SK-N-SH (cell line): ENCODE measurements at regions of chr9 and their contacts with region 1.

Region 1: DNA sequence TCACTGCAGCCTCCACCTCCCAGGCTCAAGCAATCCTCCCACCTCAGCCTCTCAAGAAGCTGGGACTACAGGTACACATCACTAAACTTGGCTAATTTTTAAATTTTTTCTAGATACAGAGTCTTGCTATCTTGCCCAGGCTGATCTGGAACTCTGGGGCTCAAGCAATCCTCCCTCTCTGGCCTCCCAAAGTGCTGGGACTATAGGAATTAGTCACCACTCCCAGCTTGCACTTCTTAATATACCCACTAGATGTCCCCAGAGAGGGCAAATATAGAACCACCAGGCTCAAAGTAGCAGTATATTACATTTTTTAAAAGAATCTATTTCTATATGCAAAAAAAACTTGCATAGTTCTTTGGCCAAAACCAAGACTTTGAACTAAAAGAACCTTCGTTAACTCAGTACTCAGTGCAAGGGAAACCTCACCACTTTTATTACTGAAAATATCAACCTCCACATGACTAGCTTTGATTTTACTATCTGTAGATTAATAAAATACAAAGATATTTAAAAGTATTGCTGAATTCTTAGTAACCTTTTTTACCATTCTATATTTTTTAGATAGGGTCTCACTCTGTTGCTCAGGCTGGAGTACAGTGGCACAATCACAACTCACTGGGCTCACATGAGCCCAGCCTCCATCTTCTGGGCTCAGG is 25.8 kb upstream of the HSD17B3 start:
- DNase-seq: peak; percentile 68
- H3K4me3 ChIP-seq: no peak overlapping the region
- H3K27ac ChIP-seq: no peak overlapping the region
- H3K4me1 ChIP-seq: 0 out of 4 replicates have a peak, but pooled peaks cover 0 to 3% of the 10 kb centered on the region in 2 experiments
- H3K27me3 ChIP-seq: no peaks in the 10 kb centered on the region
- CTCF ChIP-seq: peak; percentile 90
- EP300 ChIP-seq: no peak
- RAD21 ChIP-seq: peak; percentile 82

Region 2: GRCh38 chr9:96177005-96177718 is 150.7 kb before region 1 on chr9:
- CTCF ChIA-PET with region 1: no interaction called
- POLR2A ChIA-PET with region 1: no interaction called
- DNase-seq: peak; percentile 68
- H3K4me3 ChIP-seq: no peak overlapping the region
- H3K27ac ChIP-seq: no peak overlapping the region
- H3K4me1 ChIP-seq: no peaks in the 10 kb centered on the region; a peak in 1 of 4 replicates
- H3K27me3 ChIP-seq: no peaks in the 10 kb centered on the region
- CTCF ChIP-seq: no peak
- EP300 ChIP-seq: no peak
- RAD21 ChIP-seq: peak; percentile 53

Region 3: GRCh38 chr9:96232539-96233241 is 95.1 kb before region 1 on chr9:
- CTCF ChIA-PET with region 1: interaction called, 13 read pairs
- POLR2A ChIA-PET with region 1: no interaction called
- DNase-seq: peak; percentile 70
- H3K4me3 ChIP-seq: no peak overlapping the region; a peak in 1 of 4 replicates
- H3K27ac ChIP-seq: no peak overlapping the region
- H3K4me1 ChIP-seq: no peaks in the 10 kb centered on the region
- H3K27me3 ChIP-seq: no peaks in the 10 kb centered on the region
- CTCF ChIP-seq: peak; percentile 93
- EP300 ChIP-seq: no peak
- RAD21 ChIP-seq: peak; percentile 75

Region 4: DNA sequence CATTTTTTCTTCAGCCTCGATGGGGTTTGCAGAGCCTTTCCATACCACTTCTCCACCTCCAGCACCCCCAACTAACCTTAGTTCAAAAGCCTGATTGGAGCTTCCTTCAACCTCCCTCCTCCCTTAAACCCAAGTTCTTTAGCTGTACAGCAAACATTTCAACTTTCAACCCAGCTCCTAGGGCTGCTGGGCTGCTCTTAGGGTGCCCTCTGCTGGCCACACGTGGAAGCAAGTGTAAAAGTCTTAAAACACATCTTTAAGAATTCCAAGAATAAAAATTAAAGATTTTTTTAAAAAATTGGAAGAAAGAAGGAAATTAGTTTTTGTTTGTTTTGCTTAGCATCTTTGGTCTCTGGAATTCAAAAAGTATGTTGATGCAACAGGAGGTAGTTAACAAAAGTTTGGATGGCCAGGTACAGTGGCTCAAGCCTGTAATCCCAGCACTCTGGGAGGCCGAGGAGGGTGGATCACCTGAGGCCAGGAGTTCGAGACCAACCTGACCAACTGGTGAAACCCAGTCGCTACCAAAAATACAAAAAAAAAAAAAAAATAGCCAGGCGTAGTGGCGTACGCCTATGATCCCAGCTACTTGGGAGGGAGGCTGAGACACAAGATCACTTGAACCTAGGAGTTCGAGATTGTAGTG is 10.4 kb before region 1 on chr9:
- CTCF ChIA-PET with region 1: interaction called, 43 read pairs
- POLR2A ChIA-PET with region 1: no interaction called
- DNase-seq: peak; percentile 73
- H3K4me3 ChIP-seq: no peak overlapping the region; a peak in 1 of 4 replicates
- H3K27ac ChIP-seq: no peak overlapping the region
- H3K4me1 ChIP-seq: no peaks in the 10 kb centered on the region
- H3K27me3 ChIP-seq: no peaks in the 10 kb centered on the region
- CTCF ChIP-seq: peak; percentile 99
- EP300 ChIP-seq: no peak
- RAD21 ChIP-seq: peak; percentile 92

Region 5: DNA sequence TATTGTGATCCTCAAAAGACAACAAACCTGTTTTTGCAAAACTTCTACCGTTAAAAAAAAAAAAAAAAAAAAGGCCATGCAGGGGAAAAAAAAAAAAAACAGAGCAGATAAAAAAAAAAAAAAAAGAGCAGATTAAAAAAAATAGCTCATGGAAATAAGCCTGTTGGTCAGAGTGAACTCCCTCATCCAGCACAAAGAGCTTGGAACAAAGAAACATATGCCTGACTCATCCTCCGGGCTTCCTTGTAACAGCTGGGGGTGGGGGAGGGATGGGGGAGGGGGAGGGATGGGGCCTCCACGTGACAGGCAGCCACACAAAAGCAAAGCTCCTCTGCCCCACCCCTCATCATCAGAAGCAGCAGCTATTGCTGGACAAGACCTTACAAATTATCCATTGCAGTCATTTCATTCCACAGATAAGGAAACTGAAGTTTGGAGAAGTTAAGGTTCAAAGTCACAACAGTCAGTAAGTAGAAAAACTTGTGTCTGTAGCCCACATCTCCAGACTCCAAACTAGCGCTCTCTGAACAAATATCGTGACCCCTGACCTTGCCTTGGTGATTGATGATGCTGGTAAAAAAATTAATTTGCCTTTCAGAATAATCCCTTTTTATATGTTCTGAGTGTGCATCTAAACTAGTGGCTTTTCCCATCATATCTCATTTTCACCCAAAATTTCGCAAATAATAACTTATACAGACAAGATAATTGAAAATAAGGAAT is 16.8 kb after region 1 on chr9:
- CTCF ChIA-PET with region 1: interaction called, 19 read pairs
- POLR2A ChIA-PET with region 1: no interaction called
- DNase-seq: peak; percentile 63
- H3K4me3 ChIP-seq: no peak overlapping the region
- H3K27ac ChIP-seq: peak overlapping the region; percentile 64 to 81; a peak in 3 of 4 replicates
- H3K4me1 ChIP-seq: peaks cover 2 to 26% of the 10 kb centered on the region in 2 experiments; a peak in 3 of 4 replicates
- H3K27me3 ChIP-seq: no peaks in the 10 kb centered on the region
- CTCF ChIP-seq: no peak
- EP300 ChIP-seq: peak in 1 of 2 experiments; percentile 48; a peak in 1 of 4 replicates
- RAD21 ChIP-seq: no peak

Region 6: DNA sequence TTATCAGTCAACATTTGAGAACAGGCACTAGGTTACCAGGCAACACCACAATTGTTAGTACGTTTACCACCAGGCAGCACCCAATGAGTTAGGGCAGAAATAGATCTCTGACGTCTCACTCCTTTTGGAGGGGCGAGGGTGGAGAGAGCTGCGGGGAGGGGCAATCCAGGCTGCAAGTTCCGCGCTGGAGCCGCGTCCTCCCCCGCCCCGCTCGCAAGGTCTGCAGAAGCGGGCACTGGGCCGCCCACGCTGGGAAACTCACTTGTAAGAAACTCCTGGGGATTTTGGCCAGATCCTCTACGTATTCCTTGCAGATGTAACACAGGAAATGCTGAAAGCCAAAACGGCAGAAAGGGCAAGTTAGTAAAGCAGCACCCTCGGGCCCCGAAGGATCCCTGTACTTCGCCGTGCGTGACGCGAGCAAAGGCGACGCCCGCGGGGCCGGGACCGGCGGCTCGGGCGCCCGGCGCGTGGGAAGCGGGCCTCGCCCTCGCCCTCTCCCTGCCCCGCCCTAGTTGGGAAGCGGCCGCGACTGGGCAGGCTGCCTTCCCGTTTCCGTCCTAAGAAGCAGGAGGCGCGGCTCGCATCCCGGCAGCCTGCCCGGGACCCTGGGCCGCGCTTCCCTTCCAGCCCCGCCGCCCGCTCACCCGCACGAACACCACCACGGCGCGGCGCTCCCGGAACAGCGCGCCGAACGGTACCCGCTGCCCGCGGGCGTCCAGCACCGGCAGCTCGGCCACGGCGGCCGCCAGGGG is 326.8 kb after region 1 on chr9:
- CTCF ChIA-PET with region 1: interaction called, 18 read pairs
- POLR2A ChIA-PET with region 1: no interaction called
- DNase-seq: peak; percentile 88
- H3K4me3 ChIP-seq: peak overlapping the region; percentile 67 to 74
- H3K27ac ChIP-seq: peak overlapping the region; percentile 81 to 96
- H3K4me1 ChIP-seq: peaks cover 0 to 3% of the 10 kb centered on the region in 2 experiments; a peak in 1 of 4 replicates
- H3K27me3 ChIP-seq: no peaks in the 10 kb centered on the region
- CTCF ChIP-seq: no peak
- EP300 ChIP-seq: no peak
- RAD21 ChIP-seq: no peak

Region 7: GRCh38 chr9:96663506-96664120 is 335.8 kb after region 1 on chr9:
- CTCF ChIA-PET with region 1: interaction called, 80 read pairs
- POLR2A ChIA-PET with region 1: no interaction called
- DNase-seq: no peak
- H3K4me3 ChIP-seq: no peak overlapping the region
- H3K27ac ChIP-seq: no peak overlapping the region
- H3K4me1 ChIP-seq: no peaks in the 10 kb centered on the region
- H3K27me3 ChIP-seq: no peaks in the 10 kb centered on the region
- CTCF ChIP-seq: no peak
- EP300 ChIP-seq: no peak
- RAD21 ChIP-seq: no peak